Sigmoid colon (tissue), 7 donors: ENCODE measurements at regions of chr5 and their contacts with region 1.

Region 1: DNA sequence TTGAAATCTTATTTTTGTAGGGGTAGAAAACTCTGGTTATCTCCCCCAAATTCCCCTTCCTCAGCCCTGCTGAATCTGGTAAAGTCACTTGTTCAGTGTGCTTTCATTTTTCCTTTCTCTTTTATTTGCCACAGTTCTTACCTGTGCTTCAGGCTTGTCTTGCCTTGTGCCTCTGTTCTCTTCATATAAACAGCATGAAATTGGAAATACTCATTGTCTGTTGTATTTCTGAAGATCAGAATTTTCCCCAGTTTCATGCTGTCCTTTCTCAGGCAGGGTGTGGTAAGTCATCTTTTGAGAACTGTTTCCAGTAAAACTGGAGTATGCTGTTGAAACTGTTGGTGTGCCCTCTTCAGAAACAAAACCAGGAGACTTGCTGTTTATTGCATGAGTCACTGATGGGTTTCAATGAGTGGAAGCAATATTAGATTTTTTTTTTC is 7.0 kb downstream of the PAM start:
- DNase-seq: no peak
- H3K4me3 ChIP-seq: no peak overlapping the region
- H3K27ac ChIP-seq: peak overlapping the region; percentile 24 to 67 (median 44)
- H3K4me1 ChIP-seq: peaks cover 0 to 56% (median 52%) of the 10 kb centered on the region in 4 donors
- H3K27me3 ChIP-seq: no peaks in the 10 kb centered on the region
- CTCF ChIP-seq: no peak
- EP300 ChIP-seq: no peak
- POLR2A ChIP-seq: no peak

Region 2: DNA sequence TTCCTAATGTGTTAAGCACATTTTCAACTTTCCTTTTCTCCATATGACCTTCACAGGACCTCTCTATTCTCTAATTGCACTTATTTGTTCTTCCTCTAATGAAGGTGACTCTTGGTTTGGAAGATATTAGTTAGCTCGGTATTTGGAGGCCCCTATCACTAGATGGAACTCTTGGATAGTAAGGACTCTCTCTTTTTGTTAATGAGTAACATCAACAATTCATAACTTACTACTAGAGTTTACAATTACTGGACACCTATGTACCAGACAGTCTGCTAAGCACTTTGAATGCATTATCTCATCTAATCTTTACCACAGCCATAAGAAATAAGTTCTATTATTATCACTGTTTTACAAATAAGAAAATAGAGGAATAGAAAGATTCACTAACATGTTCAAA is 30.4 kb before region 1 on chr5:
- intact Hi-C with region 1: no loop called
- DNase-seq: no peak
- H3K4me3 ChIP-seq: no peak overlapping the region
- H3K27ac ChIP-seq: no peak overlapping the region
- H3K4me1 ChIP-seq: no peaks in the 10 kb centered on the region
- H3K27me3 ChIP-seq: no peaks in the 10 kb centered on the region
- CTCF ChIP-seq: no peak
- EP300 ChIP-seq: no peak
- POLR2A ChIP-seq: no peak

Region 3: DNA sequence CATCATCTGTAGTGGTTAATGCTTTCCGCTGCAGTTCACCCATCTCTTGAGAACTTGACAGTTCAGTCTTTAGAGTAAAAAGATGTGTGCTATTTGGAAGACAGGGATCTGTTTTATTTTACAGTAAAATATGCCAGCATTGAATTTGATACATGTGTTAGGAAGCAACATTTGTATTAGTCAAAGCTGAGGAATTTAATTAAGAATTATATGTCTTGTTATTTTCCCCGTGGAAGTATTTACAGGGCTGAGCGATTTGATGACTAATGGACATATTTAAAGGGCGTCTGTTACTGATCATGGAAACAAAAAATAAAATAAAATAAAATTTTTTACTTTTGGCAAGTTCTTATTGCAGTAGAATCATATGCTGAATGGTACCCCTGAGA is 94.3 kb after region 1 on chr5:
- intact Hi-C with region 1: loop called (anchors 5 kb)
- DNase-seq: no peak
- H3K4me3 ChIP-seq: no peak overlapping the region
- H3K27ac ChIP-seq: peak overlapping the region; percentile 61 to 75 (median 67)
- H3K4me1 ChIP-seq: peaks cover 0 to 31% (median 16%) of the 10 kb centered on the region in 4 donors
- H3K27me3 ChIP-seq: no peaks in the 10 kb centered on the region
- CTCF ChIP-seq: no peak
- EP300 ChIP-seq: no peak
- POLR2A ChIP-seq: no peak